CD8-positive, alpha-beta T cell (primary cell): ENCODE measurements at regions of chr9 and their contacts with region 1.

Region 1: GRCh38 chr9:114621975-114622609 is 11.0 kb downstream of the TMEM268 start:
- DNase-seq: no peak
- ATAC-seq: no peak
- H3K4me3 ChIP-seq: no peak overlapping the region
- H3K4me3 Mint-ChIP-seq: no peak overlapping the region
- H3K27ac ChIP-seq: no peak overlapping the region
- H3K27ac Mint-ChIP-seq: peak overlapping the region; percentile 32
- H3K4me1 ChIP-seq: peaks cover 7% of the 10 kb centered on the region
- H3K4me1 Mint-ChIP-seq: peaks cover 13% of the 10 kb centered on the region
- H3K27me3 ChIP-seq: no peaks in the 10 kb centered on the region
- H3K27me3 Mint-ChIP-seq: no peaks in the 10 kb centered on the region
- CTCF ChIP-seq: no peak

Region 2: GRCh38 chr9:113564498-113565237 is 1057.4 kb before region 1 on chr9:
- CTCF ChIA-PET with region 1: no interaction called
- POLR2A ChIA-PET with region 1: no interaction called
- intact Hi-C with region 1: no loop called
- DNase-seq: no peak
- ATAC-seq: no peak
- H3K4me3 ChIP-seq: no peak overlapping the region
- H3K4me3 Mint-ChIP-seq: no peak overlapping the region
- H3K27ac ChIP-seq: peak overlapping the region in 1 of 2 experiments; percentile 6
- H3K27ac Mint-ChIP-seq: no peak overlapping the region
- H3K4me1 ChIP-seq: peaks cover 15% of the 10 kb centered on the region
- H3K4me1 Mint-ChIP-seq: peaks cover 36% of the 10 kb centered on the region
- H3K27me3 ChIP-seq: no peaks in the 10 kb centered on the region
- H3K27me3 Mint-ChIP-seq: no peaks in the 10 kb centered on the region
- CTCF ChIP-seq: no peak

Region 3: GRCh38 chr9:114580698-114581097 is 41.4 kb before region 1 on chr9:
- CTCF ChIA-PET with region 1: no interaction called
- POLR2A ChIA-PET with region 1: no interaction called
- intact Hi-C with region 1: loop called in 1 of 2 experiments (anchors 5 kb)
- DNase-seq: no peak
- ATAC-seq: no peak
- H3K4me3 ChIP-seq: no peak overlapping the region
- H3K4me3 Mint-ChIP-seq: no peak overlapping the region
- H3K27ac ChIP-seq: no peak overlapping the region
- H3K27ac Mint-ChIP-seq: no peak overlapping the region
- H3K4me1 ChIP-seq: no peaks in the 10 kb centered on the region
- H3K4me1 Mint-ChIP-seq: no peaks in the 10 kb centered on the region
- H3K27me3 ChIP-seq: no peaks in the 10 kb centered on the region
- H3K27me3 Mint-ChIP-seq: no peaks in the 10 kb centered on the region
- CTCF ChIP-seq: no peak

Region 4: GRCh38 chr9:114633438-114634089 is 11.5 kb after region 1 on chr9:
- CTCF ChIA-PET with region 1: no interaction called
- POLR2A ChIA-PET with region 1: no interaction called
- intact Hi-C with region 1: no loop called
- DNase-seq: no peak
- ATAC-seq: no peak
- H3K4me3 ChIP-seq: no peak overlapping the region
- H3K4me3 Mint-ChIP-seq: no peak overlapping the region
- H3K27ac ChIP-seq: no peak overlapping the region
- H3K27ac Mint-ChIP-seq: no peak overlapping the region
- H3K4me1 ChIP-seq: no peaks in the 10 kb centered on the region
- H3K4me1 Mint-ChIP-seq: no peaks in the 10 kb centered on the region
- H3K27me3 ChIP-seq: no peaks in the 10 kb centered on the region
- H3K27me3 Mint-ChIP-seq: no peaks in the 10 kb centered on the region
- CTCF ChIP-seq: no peak